Breast epithelium (tissue), 4 donors: ENCODE measurements at regions of chr4 and their contacts with region 1.

Region 1: DNA sequence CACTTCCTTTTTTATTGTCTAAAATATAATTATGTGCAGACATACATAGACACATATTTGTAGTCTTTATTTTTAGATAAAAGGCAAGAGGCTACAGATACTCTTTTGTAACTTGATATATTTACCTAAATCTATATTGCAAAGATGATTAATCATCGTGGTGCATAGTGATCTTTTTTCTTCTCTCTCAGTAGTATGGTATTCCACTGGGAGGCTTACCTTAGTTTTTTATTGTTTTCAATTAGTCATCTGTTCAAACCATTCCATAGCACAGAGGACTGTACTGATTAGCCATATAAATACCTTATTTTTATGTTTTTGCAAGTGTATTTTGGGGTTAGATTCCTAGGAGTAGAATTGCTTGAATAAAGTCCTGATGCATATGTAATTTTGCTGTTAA is 619.7 kb downstream of the GRXCR1 start:
- DNase-seq: no peak
- H3K4me3 ChIP-seq: no peak overlapping the region
- H3K27ac ChIP-seq: no peak overlapping the region
- H3K4me1 ChIP-seq: no peaks in the 10 kb centered on the region
- H3K27me3 ChIP-seq: no peaks in the 10 kb centered on the region
- CTCF ChIP-seq: no peak
- POLR2A ChIP-seq: no peak

Region 2: GRCh38 chr4:42627885-42628646 is 884.2 kb before region 1 on chr4:
- intact Hi-C with region 1: no loop called
- DNase-seq: peak in 1 of 2 donors; percentile 51
- H3K4me3 ChIP-seq: no peak overlapping the region
- H3K27ac ChIP-seq: no peak overlapping the region
- H3K4me1 ChIP-seq: no peaks in the 10 kb centered on the region
- H3K27me3 ChIP-seq: no peaks in the 10 kb centered on the region
- CTCF ChIP-seq: no peak
- POLR2A ChIP-seq: no peak

Region 3: GRCh38 chr4:42843694-42844093 is 668.6 kb before region 1 on chr4:
- intact Hi-C with region 1: no loop called
- DNase-seq: no peak
- H3K4me3 ChIP-seq: no peak overlapping the region
- H3K27ac ChIP-seq: no peak overlapping the region
- H3K4me1 ChIP-seq: no peaks in the 10 kb centered on the region
- H3K27me3 ChIP-seq: no peaks in the 10 kb centered on the region
- CTCF ChIP-seq: no peak
- POLR2A ChIP-seq: no peak

Region 4: GRCh38 chr4:43471950-43472349 is 40.3 kb before region 1 on chr4:
- intact Hi-C with region 1: loop called (anchors 5 kb)
- DNase-seq: no peak
- H3K4me3 ChIP-seq: no peak overlapping the region
- H3K27ac ChIP-seq: no peak overlapping the region
- H3K4me1 ChIP-seq: no peaks in the 10 kb centered on the region
- H3K27me3 ChIP-seq: no peaks in the 10 kb centered on the region
- CTCF ChIP-seq: no peak
- POLR2A ChIP-seq: no peak

Region 5: DNA sequence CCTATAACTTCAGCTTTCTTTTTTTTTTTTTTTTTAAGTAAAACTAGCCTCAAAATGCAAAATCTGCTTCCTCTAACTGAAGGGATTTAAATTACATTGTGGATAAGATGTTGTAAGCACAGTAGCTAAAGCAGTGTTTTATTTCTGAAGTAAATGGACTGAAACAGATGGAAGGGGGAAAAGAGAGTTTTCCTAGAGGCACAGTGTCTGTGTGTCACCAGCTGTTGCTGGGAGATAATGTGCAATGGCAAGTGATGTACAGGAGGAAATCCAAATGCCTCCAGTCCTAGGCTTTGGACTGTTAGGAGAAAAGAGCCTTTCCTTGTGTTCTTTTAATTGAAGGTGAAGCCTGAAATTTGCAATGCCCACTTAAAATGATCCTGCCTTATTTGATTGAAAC is 52.3 kb after region 1 on chr4:
- intact Hi-C with region 1: no loop called
- DNase-seq: no peak
- H3K4me3 ChIP-seq: no peak overlapping the region
- H3K27ac ChIP-seq: no peak overlapping the region
- H3K4me1 ChIP-seq: no peaks in the 10 kb centered on the region
- H3K27me3 ChIP-seq: no peaks in the 10 kb centered on the region
- CTCF ChIP-seq: no peak
- POLR2A ChIP-seq: no peak

Region 6: GRCh38 chr4:43607827-43608461 is 95.7 kb after region 1 on chr4:
- intact Hi-C with region 1: no loop called
- DNase-seq: no peak
- H3K4me3 ChIP-seq: no peak overlapping the region
- H3K27ac ChIP-seq: no peak overlapping the region
- H3K4me1 ChIP-seq: no peaks in the 10 kb centered on the region
- H3K27me3 ChIP-seq: no peaks in the 10 kb centered on the region
- CTCF ChIP-seq: no peak
- POLR2A ChIP-seq: no peak